CD4-positive, alpha-beta memory T cell (primary cell): ENCODE measurements at regions of chr21 and their contacts with region 1.

Region 1: DNA sequence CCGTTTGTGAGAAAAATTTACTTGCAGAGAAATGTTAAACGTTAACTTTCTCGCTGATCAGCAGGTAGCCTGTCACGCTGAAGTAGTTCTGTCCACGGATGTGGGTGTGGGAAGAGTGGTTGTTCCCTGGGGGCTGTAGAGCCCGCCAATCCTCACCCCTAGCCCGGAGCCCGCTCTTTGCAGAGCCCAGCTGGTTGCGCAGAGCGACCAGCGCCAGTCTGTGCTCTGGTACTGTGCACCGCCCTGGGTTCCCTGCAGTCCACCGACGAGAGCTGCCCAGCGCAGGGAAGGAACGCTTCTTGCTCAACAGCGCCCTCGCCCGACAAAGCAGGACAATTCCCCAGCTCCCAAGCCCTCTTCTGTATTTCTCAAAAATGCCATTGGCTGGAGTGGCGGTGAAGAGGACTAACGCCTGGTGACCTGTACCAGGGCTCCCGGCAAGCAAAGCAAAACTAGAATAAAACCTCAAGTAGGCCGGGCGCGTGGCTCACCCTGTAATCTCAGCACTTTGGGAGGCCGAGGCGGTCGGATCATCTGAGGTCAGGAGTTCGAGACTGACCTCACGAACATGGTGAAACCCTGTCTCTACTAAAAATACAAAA is 3.3 kb downstream of the RIPPLY3 start:
- DNase-seq: peak; percentile 65 to 73 (median 68)
- H3K4me3 ChIP-seq: no peak overlapping the region
- H3K4me3 Mint-ChIP-seq: peak overlapping the region; percentile 40 to 87 (median 64)
- H3K27ac ChIP-seq: no peak overlapping the region
- H3K27ac Mint-ChIP-seq: peak overlapping the region in 1 of 7 donors; percentile 35
- H3K4me1 ChIP-seq: peaks cover 17% of the 10 kb centered on the region
- H3K4me1 Mint-ChIP-seq: peaks cover 8 to 18% (median 12%) of the 10 kb centered on the region in 4 donors
- H3K27me3 ChIP-seq: no peaks in the 10 kb centered on the region
- H3K27me3 Mint-ChIP-seq: peaks cover 24 to 33% of the 10 kb centered on the region in 2 donors

Region 2: DNA sequence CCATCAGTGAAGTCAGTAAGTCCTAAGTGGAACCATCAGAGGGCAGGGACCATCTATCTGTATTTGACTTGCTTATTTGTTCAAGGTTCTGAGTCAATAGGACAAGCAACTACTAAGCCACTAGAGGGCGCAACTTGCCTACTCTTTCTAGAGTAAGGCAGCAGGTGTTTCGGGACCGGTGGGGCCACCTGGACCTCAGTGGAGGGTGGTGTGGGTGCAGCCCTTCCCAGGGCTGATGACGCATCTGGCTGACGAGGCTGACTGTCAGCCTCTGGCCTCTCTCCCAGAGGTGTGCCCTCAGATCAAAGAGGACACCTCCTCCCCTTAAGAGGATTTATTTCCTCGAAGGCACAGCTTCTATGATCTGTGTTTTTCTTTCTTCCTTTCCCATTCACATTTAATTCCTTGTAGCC is 868.3 kb before region 1 on chr21:
- CTCF ChIA-PET with region 1: no interaction called
- POLR2A ChIA-PET with region 1: no interaction called
- intact Hi-C with region 1: loop called (anchors 10 kb)
- DNase-seq: peak; percentile 87 to 96 (median 89)
- H3K4me3 ChIP-seq: no peak overlapping the region
- H3K4me3 Mint-ChIP-seq: peak overlapping the region in 5 of 8 donors; percentile 7 to 53 (median 12)
- H3K27ac ChIP-seq: peak overlapping the region; percentile 54
- H3K27ac Mint-ChIP-seq: peak overlapping the region; percentile 69 to 95 (median 89)
- H3K4me1 ChIP-seq: peaks cover 40% of the 10 kb centered on the region
- H3K4me1 Mint-ChIP-seq: peaks cover 25 to 50% (median 29%) of the 10 kb centered on the region in 4 donors
- H3K27me3 ChIP-seq: no peaks in the 10 kb centered on the region
- H3K27me3 Mint-ChIP-seq: no peaks in the 10 kb centered on the region

Region 3: GRCh38 chr21:36630485-36631206 is 379.2 kb before region 1 on chr21:
- CTCF ChIA-PET with region 1: interaction called, 22 read pairs
- POLR2A ChIA-PET with region 1: no interaction called
- intact Hi-C with region 1: no loop called
- DNase-seq: peak in 4 of 5 donors; percentile 25 to 41 (median 30)
- H3K4me3 ChIP-seq: no peak overlapping the region
- H3K4me3 Mint-ChIP-seq: no peak overlapping the region
- H3K27ac ChIP-seq: no peak overlapping the region
- H3K27ac Mint-ChIP-seq: no peak overlapping the region
- H3K4me1 ChIP-seq: no peaks in the 10 kb centered on the region
- H3K4me1 Mint-ChIP-seq: no peaks in the 10 kb centered on the region
- H3K27me3 ChIP-seq: no peaks in the 10 kb centered on the region
- H3K27me3 Mint-ChIP-seq: peaks cover 6 to 19% of the 10 kb centered on the region in 2 donors

Region 4: DNA sequence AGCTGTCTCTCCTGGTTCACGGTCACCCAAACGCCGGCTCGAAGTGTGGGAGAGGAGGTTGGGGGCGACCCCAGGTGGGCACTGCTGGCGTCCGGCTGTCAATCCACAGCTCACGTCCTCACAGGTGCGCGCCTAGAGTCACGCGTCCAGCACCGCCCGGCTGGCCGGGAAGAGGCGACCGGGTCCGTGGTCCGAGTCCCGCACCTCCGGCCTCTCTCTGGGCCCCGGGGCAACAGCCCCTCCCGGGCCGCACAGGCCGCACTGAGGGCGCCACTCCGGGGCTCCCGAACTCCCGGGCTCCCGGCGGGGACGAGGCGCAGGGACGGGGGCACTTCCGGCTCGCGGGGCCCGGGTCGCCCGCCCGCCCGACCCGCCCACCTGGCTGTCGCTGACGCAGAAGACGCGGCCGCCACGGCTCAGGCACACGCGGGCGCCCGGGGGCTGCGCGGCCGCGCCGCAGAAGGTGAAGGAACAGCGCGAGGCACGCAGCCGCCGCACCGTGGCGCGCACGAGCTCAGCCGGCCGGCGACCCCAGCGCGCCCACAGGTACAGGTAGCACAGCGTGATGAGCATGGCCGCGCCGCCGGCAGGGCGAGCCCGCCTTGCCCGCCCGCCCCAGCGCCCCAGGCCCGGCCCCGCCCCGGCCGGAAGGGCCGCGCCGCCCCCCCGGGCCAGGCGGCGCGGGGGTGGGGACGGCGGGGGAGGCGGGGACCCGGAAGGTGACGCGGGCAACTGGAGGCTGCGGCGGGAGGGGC is 43.6 kb before region 1 on chr21 and contains the start of gene HLCS:
- CTCF ChIA-PET with region 1: interaction called, 8 read pairs
- POLR2A ChIA-PET with region 1: interaction called, 5 read pairs
- intact Hi-C with region 1: loop called (anchors 2 kb)
- DNase-seq: peak; percentile 72 to 80 (median 76)
- H3K4me3 ChIP-seq: peak within 1 kb of the TSS in 1 of 2 donors; percentile 54
- H3K4me3 Mint-ChIP-seq: peak within 1 kb of the TSS; percentile 76 to 92 (median 87)
- H3K27ac ChIP-seq: peak within 1 kb of the TSS; percentile 58
- H3K27ac Mint-ChIP-seq: peak within 1 kb of the TSS; percentile 81 to 96 (median 88)
- H3K4me1 ChIP-seq: peaks cover 14% of the 10 kb centered on the region
- H3K4me1 Mint-ChIP-seq: peaks cover 7 to 20% (median 15%) of the 10 kb centered on the region in 4 donors
- H3K27me3 ChIP-seq: no peaks in the 10 kb centered on the region
- H3K27me3 Mint-ChIP-seq: no peaks in the 10 kb centered on the region
- total RNA-seq, gene HLCS: 13.9 to 14.7 TPM

Region 5: GRCh38 chr21:36989699-36990507 is 19.9 kb before region 1 on chr21:
- CTCF ChIA-PET with region 1: interaction called, 26 read pairs
- POLR2A ChIA-PET with region 1: interaction called, 5 read pairs
- intact Hi-C with region 1: loop called (anchors 1 kb)
- DNase-seq: peak; percentile 73 to 90 (median 80)
- H3K4me3 ChIP-seq: peak overlapping the region; percentile 8 to 72
- H3K4me3 Mint-ChIP-seq: peak overlapping the region; percentile 80 to 95 (median 90)
- H3K27ac ChIP-seq: peak overlapping the region; percentile 60
- H3K27ac Mint-ChIP-seq: peak overlapping the region; percentile 62 to 96 (median 91)
- H3K4me1 ChIP-seq: peaks cover 19% of the 10 kb centered on the region
- H3K4me1 Mint-ChIP-seq: peaks cover 13 to 27% (median 19%) of the 10 kb centered on the region in 4 donors
- H3K27me3 ChIP-seq: no peaks in the 10 kb centered on the region
- H3K27me3 Mint-ChIP-seq: no peaks in the 10 kb centered on the region